Activated CD4-positive, alpha-beta memory T cell treated with anti-CD3 and anti-CD28 coated beads for 36 hours (primary cell): ENCODE measurements at regions of chr9 and their contacts with region 1.

Region 1: GRCh38 chr9:134163353-134164196 is 789 bp downstream of the RNU6ATAC start:
- DNase-seq: peak; percentile 78
- H3K4me3 Mint-ChIP-seq: no peak overlapping the region
- H3K27ac Mint-ChIP-seq: no peak overlapping the region
- H3K4me1 Mint-ChIP-seq: peaks cover 19% of the 10 kb centered on the region
- H3K27me3 Mint-ChIP-seq: no peaks in the 10 kb centered on the region

Region 2: GRCh38 chr9:133030317-133031129 is 1133.1 kb before region 1 on chr9 and contains the start of gene GTF3C5:
- CTCF ChIA-PET with region 1: no interaction called
- POLR2A ChIA-PET with region 1: no interaction called
- intact Hi-C with region 1: loop called (anchors 2 kb)
- DNase-seq: peak; percentile 95
- H3K4me3 Mint-ChIP-seq: peak within 1 kb of the TSS; percentile 99
- H3K27ac Mint-ChIP-seq: peak within 1 kb of the TSS; percentile 90
- H3K4me1 Mint-ChIP-seq: peaks cover 42% of the 10 kb centered on the region
- H3K27me3 Mint-ChIP-seq: no peaks in the 10 kb centered on the region
- total RNA-seq, gene GTF3C5: 80.3 to 81.2 TPM

Region 3: GRCh38 chr9:134024828-134025605 is 138.6 kb before region 1 on chr9 and contains the start of gene BRD3OS:
- CTCF ChIA-PET with region 1: interaction called, 4 read pairs
- POLR2A ChIA-PET with region 1: interaction called, 5 read pairs
- intact Hi-C with region 1: loop called (anchors 2 kb)
- DNase-seq: peak; percentile 94
- H3K4me3 Mint-ChIP-seq: peak within 1 kb of the TSS; percentile 76
- H3K27ac Mint-ChIP-seq: peak within 1 kb of the TSS; percentile 33
- H3K4me1 Mint-ChIP-seq: peaks cover 12% of the 10 kb centered on the region
- H3K27me3 Mint-ChIP-seq: no peaks in the 10 kb centered on the region
- total RNA-seq, gene BRD3OS: 12.6 to 13.2 TPM

Region 4: DNA sequence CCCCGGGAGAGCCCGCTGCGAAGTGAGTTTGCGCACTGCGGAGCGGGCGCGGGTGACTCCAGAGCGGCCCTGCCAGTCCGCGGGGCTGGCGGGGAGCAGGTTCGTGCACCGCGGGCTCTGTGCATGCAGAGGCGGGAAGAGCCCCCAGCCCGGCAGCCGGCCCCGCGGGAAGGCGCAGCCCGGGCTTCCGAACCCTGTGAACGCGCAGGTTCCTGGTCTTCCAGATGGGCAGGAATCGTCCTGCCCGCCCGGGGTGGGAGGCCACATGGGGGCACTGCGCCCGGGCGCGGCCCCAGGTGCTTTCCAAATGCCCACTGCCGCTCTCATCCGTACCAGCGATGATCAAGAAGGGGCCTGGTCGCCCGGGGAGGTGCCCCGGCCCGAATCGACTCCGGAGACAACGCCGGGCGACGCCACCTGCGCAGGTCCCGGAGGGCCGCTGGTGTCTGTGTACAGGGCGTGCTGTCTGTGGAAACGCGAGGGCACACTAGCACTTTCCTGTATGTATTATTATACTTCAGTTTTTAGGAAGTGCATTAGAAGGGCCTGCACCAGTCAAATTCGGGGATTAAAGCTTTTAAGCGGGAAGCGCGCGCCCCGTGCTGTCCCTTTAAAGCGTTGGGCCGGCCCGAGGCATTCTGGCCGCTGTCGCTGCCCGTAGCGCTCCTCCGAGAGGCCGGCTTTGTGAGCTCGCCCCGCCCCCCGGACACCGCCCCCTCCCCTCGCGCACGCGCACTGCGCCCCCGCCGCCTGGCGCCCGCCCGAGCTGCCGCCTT is 28.0 kb before region 1 on chr9 and contains the start of gene WDR5:
- CTCF ChIA-PET with region 1: interaction called, 10 read pairs
- POLR2A ChIA-PET with region 1: interaction called, 21 read pairs
- intact Hi-C with region 1: loop called (anchors 1 kb)
- DNase-seq: peak; percentile 93
- H3K4me3 Mint-ChIP-seq: peak within 1 kb of the TSS; percentile 96
- H3K27ac Mint-ChIP-seq: peak within 1 kb of the TSS; percentile 92
- H3K4me1 Mint-ChIP-seq: peaks cover 32% of the 10 kb centered on the region
- H3K27me3 Mint-ChIP-seq: no peaks in the 10 kb centered on the region
- total RNA-seq, gene WDR5: 41.6 to 43.0 TPM

Region 5: DNA sequence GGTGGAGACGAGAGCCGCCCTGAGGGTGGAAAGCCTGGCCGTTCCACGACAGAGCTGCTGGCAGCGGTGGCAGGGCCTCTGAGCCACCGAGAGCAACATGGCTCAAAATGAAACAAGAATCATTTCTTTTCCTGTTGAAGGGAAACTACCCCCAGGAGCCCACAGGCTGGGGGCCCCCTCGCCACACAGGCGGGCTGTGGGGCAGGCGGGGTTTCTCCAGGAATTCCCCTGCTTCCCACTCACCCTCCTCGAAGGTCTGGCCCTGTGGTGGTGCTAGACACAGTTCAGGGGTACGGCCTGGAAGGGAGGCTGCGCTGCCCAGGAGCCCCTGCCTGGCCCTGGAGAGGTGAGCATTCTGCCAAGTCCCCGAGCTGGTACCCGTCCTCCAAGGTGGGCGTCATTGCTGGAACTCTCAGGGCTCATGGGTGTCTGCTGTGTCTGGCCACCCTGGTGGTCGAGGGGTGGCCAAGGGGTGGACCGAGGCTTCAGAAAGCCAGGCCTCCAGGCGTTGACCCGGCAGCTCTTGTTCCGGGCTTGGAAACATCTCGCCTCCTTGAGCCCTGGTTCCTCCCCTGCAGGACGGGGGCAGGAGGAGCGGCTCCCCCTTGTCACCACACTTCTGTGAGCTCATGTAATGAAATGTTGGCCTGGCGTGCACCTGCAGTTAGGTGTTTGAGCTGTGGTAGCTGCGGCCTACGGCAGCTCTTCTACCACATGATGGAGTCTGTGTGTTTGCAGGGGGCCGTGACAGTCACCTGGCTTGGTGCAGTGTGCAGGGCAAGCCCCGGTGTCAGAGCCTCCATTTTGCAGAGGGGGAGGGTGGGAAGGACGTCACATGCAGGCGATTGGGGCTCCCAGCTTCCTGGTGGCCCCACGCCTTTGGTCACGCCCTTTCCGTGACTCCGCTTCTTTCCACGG is 228.0 kb after region 1 on chr9:
- CTCF ChIA-PET with region 1: no interaction called
- POLR2A ChIA-PET with region 1: interaction called, 13 read pairs
- intact Hi-C with region 1: loop called (anchors 1 kb)
- DNase-seq: peak; percentile 93
- H3K4me3 Mint-ChIP-seq: peak overlapping the region; percentile 78
- H3K27ac Mint-ChIP-seq: peak overlapping the region; percentile 96
- H3K4me1 Mint-ChIP-seq: peaks cover 60% of the 10 kb centered on the region
- H3K27me3 Mint-ChIP-seq: peaks cover 3% of the 10 kb centered on the region

Region 6: DNA sequence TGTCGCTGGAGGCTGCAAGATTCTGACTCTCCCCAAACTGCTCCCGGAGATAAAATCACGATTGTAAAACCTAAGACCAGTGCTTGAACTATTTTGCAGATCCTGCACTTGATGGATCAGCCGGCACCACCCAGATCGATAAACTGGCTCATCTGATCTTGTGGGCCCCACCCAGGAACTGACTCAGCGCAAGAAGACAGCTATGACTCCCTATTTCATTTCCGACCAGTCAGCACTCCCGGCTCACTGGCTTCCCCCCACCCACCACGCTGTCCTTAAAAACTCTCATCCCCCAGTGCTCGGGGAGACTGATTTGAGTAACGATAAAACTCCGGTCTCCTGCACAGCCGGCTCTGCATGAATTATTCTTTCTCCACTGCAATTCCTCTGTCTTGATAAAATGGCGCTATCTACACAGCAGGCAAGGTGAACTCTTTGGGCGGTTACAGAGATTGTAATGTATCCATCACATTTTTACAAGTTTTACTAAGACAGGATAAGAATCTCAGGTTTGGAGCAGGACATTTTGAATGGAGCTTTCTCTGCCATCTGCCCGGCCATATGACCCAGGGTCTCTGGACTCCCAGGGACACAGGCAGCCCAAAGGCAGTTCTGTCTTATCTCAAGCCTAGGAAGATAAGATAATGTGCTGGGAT is 1305.4 kb after region 1 on chr9:
- CTCF ChIA-PET with region 1: no interaction called
- POLR2A ChIA-PET with region 1: no interaction called
- intact Hi-C with region 1: loop called (anchors 5 kb)
- DNase-seq: peak; percentile 89
- H3K4me3 Mint-ChIP-seq: peak overlapping the region; percentile 47
- H3K27ac Mint-ChIP-seq: no peak overlapping the region
- H3K4me1 Mint-ChIP-seq: peaks cover 22% of the 10 kb centered on the region
- H3K27me3 Mint-ChIP-seq: peaks cover 16% of the 10 kb centered on the region